PC-3 (cell line): ENCODE measurements at regions of chr4 and their contacts with region 1.

Region 1: GRCh38 chr4:107643021-107643420 is 77.0 kb downstream of the PAPSS1 start:
- DNase-seq: no peak
- ATAC-seq: no peak
- H3K4me3 ChIP-seq: no peak overlapping the region
- H3K27ac ChIP-seq: no peak overlapping the region
- H3K4me1 ChIP-seq: no peaks in the 10 kb centered on the region
- H3K27me3 ChIP-seq: no peaks in the 10 kb centered on the region
- CTCF ChIP-seq: no peak

Region 2: GRCh38 chr4:108592674-108592986 is 949.6 kb after region 1 on chr4:
- CTCF ChIA-PET with region 1: no interaction called
- POLR2A ChIA-PET with region 1: interaction called, 18 read pairs
- intact Hi-C with region 1: no loop called
- DNase-seq: no peak
- ATAC-seq: no peak
- H3K4me3 ChIP-seq: no peak overlapping the region
- H3K27ac ChIP-seq: no peak overlapping the region
- H3K4me1 ChIP-seq: no peaks in the 10 kb centered on the region
- H3K27me3 ChIP-seq: no peaks in the 10 kb centered on the region
- CTCF ChIP-seq: no peak